Activated CD8-positive, alpha-beta memory T cell treated with anti-CD3 and anti-CD28 coated beads, Interleukin-2, amount 10 ng/mL, durations not matched to agents 7 days and 5 days (primary cell): ENCODE measurements at regions of chr17 and their contacts with region 1.

Region 1: DNA sequence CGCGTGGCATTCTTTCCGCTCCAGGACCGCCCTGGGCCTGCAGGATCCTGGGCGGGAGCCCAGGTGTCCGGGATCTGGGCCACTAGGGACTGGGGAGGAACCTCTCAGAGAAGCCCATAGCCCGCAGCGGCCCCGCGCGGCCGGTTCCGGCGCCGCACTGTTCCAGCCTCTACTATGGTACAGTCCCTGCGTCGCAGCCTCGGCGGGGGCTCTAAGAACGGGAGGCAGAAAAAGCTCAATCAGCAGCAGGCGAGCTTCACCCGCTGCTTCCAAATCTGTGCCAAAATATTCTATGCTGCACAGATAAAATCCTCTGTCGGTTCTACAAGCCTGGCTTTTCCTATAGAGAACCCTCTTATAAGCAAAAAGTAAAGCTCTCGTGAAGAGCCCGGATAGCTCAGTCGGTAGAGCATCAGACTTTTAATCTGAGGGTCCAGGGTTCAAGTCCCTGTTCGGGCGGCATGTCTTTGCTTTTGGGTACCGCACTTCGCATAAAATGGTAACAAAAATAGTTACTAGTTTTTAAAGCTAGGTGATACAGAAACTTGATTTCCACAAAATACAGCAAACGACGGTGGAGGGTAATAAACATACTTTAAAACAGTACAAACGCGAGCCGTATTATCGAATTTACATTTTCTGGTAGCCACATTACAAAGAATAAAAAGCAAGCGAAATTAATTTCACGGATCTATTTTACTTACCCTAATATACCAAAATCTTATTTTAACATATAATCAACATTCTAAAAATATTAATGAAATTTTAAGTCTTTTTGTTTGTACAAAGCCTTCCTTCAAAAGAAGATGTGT is 661 bp upstream of the ALOXE3 start:
- DNase-seq: peak; percentile 92
- ATAC-seq: peak; percentile 69
- H3K4me3 Mint-ChIP-seq: peak overlapping the region; percentile 95
- H3K27ac Mint-ChIP-seq: peak overlapping the region; percentile 88
- H3K4me1 Mint-ChIP-seq: peaks cover 48% of the 10 kb centered on the region
- H3K27me3 Mint-ChIP-seq: peaks cover 59% of the 10 kb centered on the region

Region 2: GRCh38 chr17:8029135-8029534 is 89.8 kb before region 1 on chr17:
- CTCF ChIA-PET with region 1: no interaction called
- DNase-seq: no peak
- ATAC-seq: no peak
- H3K4me3 Mint-ChIP-seq: no peak overlapping the region
- H3K27ac Mint-ChIP-seq: no peak overlapping the region
- H3K4me1 Mint-ChIP-seq: no peaks in the 10 kb centered on the region
- H3K27me3 Mint-ChIP-seq: peaks cover 54% of the 10 kb centered on the region

Region 3: GRCh38 chr17:8048236-8048635 is 70.7 kb before region 1 on chr17:
- CTCF ChIA-PET with region 1: no interaction called
- DNase-seq: no peak
- ATAC-seq: no peak
- H3K4me3 Mint-ChIP-seq: no peak overlapping the region
- H3K27ac Mint-ChIP-seq: no peak overlapping the region
- H3K4me1 Mint-ChIP-seq: no peaks in the 10 kb centered on the region
- H3K27me3 Mint-ChIP-seq: no peaks in the 10 kb centered on the region

Region 4: DNA sequence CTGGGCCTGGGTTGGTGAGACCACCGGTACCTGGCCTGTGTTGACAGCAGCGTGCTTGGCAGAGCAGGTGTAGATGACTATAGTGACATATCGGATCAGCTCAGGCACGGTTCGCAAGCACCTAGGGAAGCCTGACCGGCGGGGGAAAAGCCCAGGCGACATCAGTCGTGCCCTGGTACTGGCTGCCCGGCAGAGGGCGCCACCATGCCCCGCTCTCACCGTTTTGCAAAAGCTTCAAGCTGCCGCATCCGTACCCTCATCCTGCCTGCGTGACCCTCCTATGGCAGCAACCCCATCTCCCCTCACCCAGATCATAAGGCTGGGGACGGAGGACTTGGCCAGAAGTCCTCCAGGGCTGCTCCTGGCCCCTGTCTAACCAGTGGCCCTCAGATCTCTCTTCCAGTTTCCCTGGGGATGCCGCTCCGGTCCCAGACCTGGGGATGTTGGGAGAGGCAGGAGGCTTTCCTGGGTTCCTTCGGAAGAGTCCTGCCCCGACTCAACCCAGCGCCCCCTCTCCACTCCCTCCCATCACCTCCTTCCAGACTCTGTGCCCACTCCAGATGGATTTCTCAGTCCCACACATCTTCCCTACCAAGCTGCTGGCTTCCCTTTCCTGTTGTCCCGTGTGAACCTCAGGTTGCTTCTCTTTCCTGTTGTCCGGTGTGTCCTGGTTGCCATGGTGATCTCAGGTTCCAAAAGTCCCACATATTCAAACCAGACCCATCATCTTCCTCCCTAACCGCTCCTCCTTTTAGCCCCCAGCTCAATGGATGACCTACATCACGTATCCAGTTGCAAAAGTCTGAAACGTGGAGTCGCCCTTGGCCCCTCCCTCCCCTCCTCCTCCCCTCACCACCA is 45.1 kb before region 1 on chr17:
- CTCF ChIA-PET with region 1: interaction called, 40 read pairs
- DNase-seq: peak; percentile 87
- ATAC-seq: peak; percentile 86
- H3K4me3 Mint-ChIP-seq: peak overlapping the region; percentile 37
- H3K27ac Mint-ChIP-seq: no peak overlapping the region
- H3K4me1 Mint-ChIP-seq: peaks cover 17% of the 10 kb centered on the region
- H3K27me3 Mint-ChIP-seq: peaks cover 61% of the 10 kb centered on the region

Region 5: DNA sequence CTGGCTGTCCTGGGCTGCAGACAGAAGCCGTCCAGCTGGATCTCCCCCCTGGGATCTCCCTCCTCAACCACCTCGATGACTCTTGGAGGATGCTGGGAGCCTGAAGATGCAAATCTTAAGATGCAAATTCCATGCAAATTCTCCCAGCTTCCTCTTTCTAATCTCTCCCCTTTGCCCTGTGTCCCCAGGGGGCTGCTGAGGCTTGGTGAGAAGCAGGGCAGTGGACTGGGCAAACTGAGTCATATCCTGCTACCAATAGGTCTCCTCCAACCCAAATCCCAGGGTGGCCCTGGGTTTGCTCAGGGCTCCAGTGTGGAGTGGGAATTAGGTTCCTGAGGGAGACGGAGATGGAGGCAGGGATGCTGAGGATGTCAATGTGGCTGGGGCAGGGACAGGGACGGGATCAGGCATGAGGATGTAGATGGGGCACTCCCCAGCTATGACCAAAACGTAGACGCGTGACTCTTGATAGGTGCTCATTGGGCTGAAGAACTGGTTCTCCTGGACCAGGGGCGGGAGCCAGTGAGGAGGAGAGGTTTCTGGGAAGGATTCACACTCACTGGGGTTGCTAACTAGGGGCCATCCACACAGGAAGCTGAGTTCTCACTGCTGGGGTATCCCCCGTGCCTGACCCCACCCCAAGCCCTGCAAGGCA is 27.8 kb before region 1 on chr17:
- CTCF ChIA-PET with region 1: interaction called, 82 read pairs
- DNase-seq: no peak
- ATAC-seq: no peak
- H3K4me3 Mint-ChIP-seq: no peak overlapping the region
- H3K27ac Mint-ChIP-seq: no peak overlapping the region
- H3K4me1 Mint-ChIP-seq: peaks cover 6% of the 10 kb centered on the region
- H3K27me3 Mint-ChIP-seq: peaks cover 31% of the 10 kb centered on the region

Region 6: DNA sequence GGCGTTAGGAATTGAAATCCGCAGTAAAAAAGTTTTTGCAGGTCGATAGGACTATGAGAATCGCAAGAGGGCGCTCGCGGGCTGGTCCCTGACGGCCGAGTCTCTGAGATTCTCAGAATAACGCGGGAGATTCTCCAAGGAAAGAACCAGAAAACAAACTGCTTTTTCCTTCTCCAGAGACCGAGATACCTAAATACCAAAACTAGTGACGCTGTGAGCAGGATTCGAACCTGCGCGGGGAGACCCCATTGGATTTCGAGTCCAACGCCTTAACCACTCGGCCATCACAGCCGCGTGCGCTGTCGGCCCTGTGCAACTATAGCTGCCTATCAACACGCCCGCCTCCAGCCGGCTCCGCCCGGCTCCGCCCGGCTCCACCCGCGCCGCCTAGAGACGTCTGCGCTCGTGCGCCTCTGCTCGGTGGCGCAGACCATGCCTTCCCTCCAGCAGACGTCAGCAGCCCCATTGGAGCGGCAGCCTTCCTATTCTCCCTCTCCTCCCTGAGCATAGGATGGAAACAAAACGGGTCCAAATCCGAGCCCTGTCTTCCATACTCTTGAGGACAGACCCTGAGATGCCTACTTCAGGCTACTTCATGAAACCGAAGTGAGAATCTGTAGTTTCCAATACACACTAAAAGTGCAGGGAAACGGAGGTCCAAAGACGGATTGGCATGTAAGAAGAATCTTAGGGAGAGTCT is 19.8 kb after region 1 on chr17:
- CTCF ChIA-PET with region 1: interaction called, 47 read pairs
- DNase-seq: peak; percentile 98
- ATAC-seq: peak; percentile 95
- H3K4me3 Mint-ChIP-seq: no peak overlapping the region
- H3K27ac Mint-ChIP-seq: no peak overlapping the region
- H3K4me1 Mint-ChIP-seq: peaks cover 2% of the 10 kb centered on the region
- H3K27me3 Mint-ChIP-seq: peaks cover 5% of the 10 kb centered on the region

Region 7: GRCh38 chr17:8189711-8190477 is 70.9 kb after region 1 on chr17 and contains the start of gene BORCS6:
- CTCF ChIA-PET with region 1: interaction called, 25 read pairs
- DNase-seq: peak; percentile 99
- ATAC-seq: peak; percentile 70
- H3K4me3 Mint-ChIP-seq: no peak within 1 kb of the TSS
- H3K27ac Mint-ChIP-seq: no peak within 1 kb of the TSS
- H3K4me1 Mint-ChIP-seq: peaks cover 10% of the 10 kb centered on the region
- H3K27me3 Mint-ChIP-seq: no peaks in the 10 kb centered on the region
- total RNA-seq, gene BORCS6: 14.9 to 16.8 TPM

Region 8: GRCh38 chr17:8248751-8249607 is 130.0 kb after region 1 on chr17 and contains the start of gene PFAS:
- CTCF ChIA-PET with region 1: interaction called, 20 read pairs
- DNase-seq: peak; percentile 98
- ATAC-seq: peak; percentile 75
- H3K4me3 Mint-ChIP-seq: peak within 1 kb of the TSS; percentile 98
- H3K27ac Mint-ChIP-seq: peak within 1 kb of the TSS; percentile 100
- H3K4me1 Mint-ChIP-seq: peaks cover 38% of the 10 kb centered on the region
- H3K27me3 Mint-ChIP-seq: no peaks in the 10 kb centered on the region
- total RNA-seq, gene PFAS: 75.1 to 113 TPM